Vagina (tissue), 2 donors: ENCODE measurements at regions of chr6 and their contacts with region 1.

Region 1: GRCh38 chr6:135270676-135271536 is 89.8 kb downstream of the MYB start:
- DNase-seq: no peak
- H3K4me3 ChIP-seq: no peak overlapping the region
- H3K27ac ChIP-seq: no peak overlapping the region
- H3K4me1 ChIP-seq: no peaks in the 10 kb centered on the region
- H3K27me3 ChIP-seq: no peaks in the 10 kb centered on the region
- CTCF ChIP-seq: no peak
- POLR2A ChIP-seq: no peak

Region 2: GRCh38 chr6:134619789-134620188 is 651.1 kb before region 1 on chr6:
- intact Hi-C with region 1: loop called (anchors 5 kb)
- DNase-seq: no peak
- H3K4me3 ChIP-seq: no peak overlapping the region
- H3K27ac ChIP-seq: no peak overlapping the region
- H3K4me1 ChIP-seq: peaks cover 4% of the 10 kb centered on the region
- H3K27me3 ChIP-seq: no peaks in the 10 kb centered on the region
- CTCF ChIP-seq: no peak
- POLR2A ChIP-seq: no peak

Region 3: GRCh38 chr6:135240692-135241091 is 30.2 kb before region 1 on chr6:
- intact Hi-C with region 1: no loop called
- DNase-seq: no peak
- H3K4me3 ChIP-seq: no peak overlapping the region
- H3K27ac ChIP-seq: no peak overlapping the region
- H3K4me1 ChIP-seq: no peaks in the 10 kb centered on the region
- H3K27me3 ChIP-seq: no peaks in the 10 kb centered on the region
- CTCF ChIP-seq: no peak
- POLR2A ChIP-seq: no peak

Region 4: GRCh38 chr6:135251964-135252429 is 18.9 kb before region 1 on chr6:
- intact Hi-C with region 1: no loop called
- DNase-seq: no peak
- H3K4me3 ChIP-seq: no peak overlapping the region
- H3K27ac ChIP-seq: no peak overlapping the region
- H3K4me1 ChIP-seq: peaks cover 2% of the 10 kb centered on the region
- H3K27me3 ChIP-seq: no peaks in the 10 kb centered on the region
- CTCF ChIP-seq: no peak
- POLR2A ChIP-seq: no peak